ENCODE measurements at regions of chr3 and their contacts with region 1.

Region 1: GRCh38 chr3:134794950-134795745 is at the start of gene EPHB1:
- DNase-seq: peak; percentile 87
- CTCF ChIP-seq: peak; percentile 95

Region 2: GRCh38 chr3:134978658-134979057 is 183.5 kb after region 1 on chr3:
- in situ Hi-C with region 1: no loop called
- DNase-seq: no peak
- CTCF ChIP-seq: peak; percentile 13

Region 3: DNA sequence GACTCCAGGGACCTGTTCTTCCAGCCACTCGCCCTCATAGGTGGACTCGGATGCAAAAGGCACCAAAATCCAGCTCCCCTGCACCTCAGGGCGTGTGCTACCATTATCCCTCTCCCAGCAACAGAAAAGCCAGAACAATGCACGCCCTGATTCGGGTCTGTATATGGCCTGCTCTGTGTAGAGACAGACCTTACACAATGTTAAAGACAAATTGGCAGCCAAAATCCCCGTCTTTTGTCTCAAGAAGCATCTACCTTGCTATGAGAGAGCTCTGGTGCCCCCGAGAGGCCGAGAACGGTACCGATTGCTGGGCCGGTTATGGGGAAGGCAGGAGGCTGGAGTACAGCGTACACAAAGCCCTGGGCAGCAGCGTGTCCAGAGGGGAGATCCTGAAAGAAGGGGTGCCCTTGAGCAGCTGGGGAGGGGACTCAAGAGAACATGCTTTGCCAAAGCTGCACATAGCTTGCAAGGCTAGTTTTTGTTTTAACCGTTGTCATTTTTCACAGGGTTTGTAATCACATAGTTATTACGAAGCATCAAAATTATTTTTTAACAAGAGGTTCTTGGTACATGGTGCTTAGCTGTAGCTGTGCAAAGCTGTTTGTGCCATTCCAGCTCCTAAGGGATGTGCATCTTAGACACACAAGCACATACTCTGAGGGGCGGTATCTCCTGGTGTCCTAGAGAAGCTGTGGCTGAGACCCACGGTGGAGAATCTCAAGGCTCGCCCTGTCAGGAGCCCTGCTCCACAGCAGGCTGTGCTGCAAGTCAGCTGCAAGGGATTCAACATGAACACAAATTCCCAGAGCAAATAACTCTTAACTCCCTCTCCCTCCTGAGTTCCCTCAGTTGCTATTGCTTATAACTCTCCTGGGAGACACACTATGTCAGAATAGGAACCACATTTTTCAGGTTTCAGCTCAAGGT is 708.9 kb after region 1 on chr3:
- in situ Hi-C with region 1: loop called (anchors 25 kb)
- DNase-seq: peak; percentile 53
- CTCF ChIP-seq: peak; percentile 65

Measured in GM13977 (cell line).